Activated T-helper 1 cell treated with anti-CD3 and anti-CD28 coated beads, Interleukin-12 subunit alpha, Interleukin-12 subunit beta, Interleukin-2, Interleukin-4 antibody, amounts not matched to agents 30 ng/mL and 10 ng/mL and 1 ng/mL, durations not matched to agents 14 hours and 24 hours and 36 hours (primary cell): ENCODE measurements at regions of chr5 and their contacts with region 1.

Region 1: GRCh38 chr5:62284946-62285891 is 20.8 kb upstream of the KIF2A start:
- DNase-seq: peak; percentile 69
- H3K4me3 Mint-ChIP-seq: peak overlapping the region; percentile 51
- H3K27ac Mint-ChIP-seq: peak overlapping the region; percentile 95
- H3K4me1 Mint-ChIP-seq: peaks cover 83% of the 10 kb centered on the region
- H3K27me3 Mint-ChIP-seq: peaks cover 1% of the 10 kb centered on the region

Region 2: DNA sequence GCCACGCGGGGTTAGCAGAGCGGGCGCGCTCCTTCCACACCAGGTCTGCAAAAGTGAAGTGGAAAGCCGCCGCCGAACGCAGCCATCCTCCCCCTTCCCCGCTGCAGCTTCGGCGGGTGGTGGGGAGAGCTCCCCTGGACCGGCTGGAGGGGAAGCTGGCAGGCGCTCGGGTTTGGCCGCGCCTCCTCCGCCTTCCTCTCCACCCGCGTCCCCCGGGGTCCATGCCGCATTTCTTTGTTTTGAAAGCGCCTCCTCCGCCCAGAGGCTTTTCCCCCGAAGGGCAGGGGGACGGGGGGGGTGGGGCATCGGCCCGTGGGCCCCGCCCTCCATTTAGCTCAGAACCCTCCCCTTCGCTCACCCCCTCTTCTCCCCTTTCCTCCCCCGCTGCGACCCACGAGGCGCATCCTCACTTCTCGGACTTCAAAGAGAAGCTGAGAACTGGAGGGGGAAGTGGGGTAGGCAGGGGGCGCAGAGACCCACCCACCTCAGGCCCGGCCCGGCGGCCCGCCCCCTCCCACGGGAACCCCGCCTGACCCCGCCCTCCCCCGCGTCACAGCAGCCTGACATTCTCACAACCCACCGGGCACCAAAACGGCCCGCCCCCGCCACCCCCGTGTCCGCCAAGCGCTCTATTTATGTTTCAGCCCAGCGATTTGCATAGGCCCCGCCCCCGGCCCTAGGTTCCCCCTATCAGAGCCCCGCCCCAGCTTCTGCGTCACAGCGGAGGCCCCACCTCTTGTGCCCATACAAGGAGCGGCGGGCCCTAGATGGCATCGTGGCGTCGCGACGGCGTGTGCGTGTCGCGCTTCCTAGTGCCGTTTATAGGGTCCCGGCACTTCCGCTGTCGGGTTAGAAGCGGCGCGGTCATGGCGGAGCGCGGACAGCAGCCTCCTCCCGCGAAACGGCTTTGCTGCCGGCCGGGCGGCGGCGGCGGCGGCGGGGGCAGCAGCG is 953.5 kb before region 1 on chr5 and contains the start of gene ZSWIM6:
- intact Hi-C with region 1: loop called (anchors 5 kb)
- DNase-seq: peak; percentile 96
- H3K4me3 Mint-ChIP-seq: peak within 1 kb of the TSS; percentile 96
- H3K27ac Mint-ChIP-seq: peak within 1 kb of the TSS; percentile 99
- H3K4me1 Mint-ChIP-seq: peaks cover 52% of the 10 kb centered on the region
- H3K27me3 Mint-ChIP-seq: peaks cover 45% of the 10 kb centered on the region
- total RNA-seq, gene ZSWIM6: 9.6 TPM in 2 replicates

Region 3: GRCh38 chr5:62231576-62231975 is 53.6 kb before region 1 on chr5:
- intact Hi-C with region 1: loop called (anchors 1 kb)
- DNase-seq: no peak
- H3K4me3 Mint-ChIP-seq: no peak overlapping the region
- H3K27ac Mint-ChIP-seq: no peak overlapping the region
- H3K4me1 Mint-ChIP-seq: peaks cover 58% of the 10 kb centered on the region
- H3K27me3 Mint-ChIP-seq: no peaks in the 10 kb centered on the region

Region 4: DNA sequence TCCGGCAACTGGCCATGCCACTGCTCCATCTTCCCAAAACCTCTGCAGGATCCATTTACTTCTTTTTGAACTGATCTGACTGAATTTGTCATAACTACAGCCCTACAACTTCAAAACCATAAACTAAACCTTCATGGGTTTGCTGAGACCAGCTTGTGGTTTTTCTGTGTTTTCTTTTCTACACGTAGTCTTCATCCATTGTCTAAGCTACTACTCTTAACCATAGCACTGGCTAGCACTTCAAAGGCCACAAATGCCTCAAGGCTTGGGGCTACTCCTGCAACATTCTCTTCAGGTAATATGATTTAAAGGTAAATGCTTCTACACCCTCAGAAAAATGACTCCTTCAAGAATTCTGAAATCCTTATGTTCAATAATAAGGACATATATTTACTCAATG is 11.8 kb after region 1 on chr5:
- intact Hi-C with region 1: loop called (anchors 1 kb)
- DNase-seq: peak; percentile 44
- H3K4me3 Mint-ChIP-seq: peak overlapping the region; percentile 50
- H3K27ac Mint-ChIP-seq: peak overlapping the region; percentile 67
- H3K4me1 Mint-ChIP-seq: peaks cover 76% of the 10 kb centered on the region
- H3K27me3 Mint-ChIP-seq: no peaks in the 10 kb centered on the region

Region 5: DNA sequence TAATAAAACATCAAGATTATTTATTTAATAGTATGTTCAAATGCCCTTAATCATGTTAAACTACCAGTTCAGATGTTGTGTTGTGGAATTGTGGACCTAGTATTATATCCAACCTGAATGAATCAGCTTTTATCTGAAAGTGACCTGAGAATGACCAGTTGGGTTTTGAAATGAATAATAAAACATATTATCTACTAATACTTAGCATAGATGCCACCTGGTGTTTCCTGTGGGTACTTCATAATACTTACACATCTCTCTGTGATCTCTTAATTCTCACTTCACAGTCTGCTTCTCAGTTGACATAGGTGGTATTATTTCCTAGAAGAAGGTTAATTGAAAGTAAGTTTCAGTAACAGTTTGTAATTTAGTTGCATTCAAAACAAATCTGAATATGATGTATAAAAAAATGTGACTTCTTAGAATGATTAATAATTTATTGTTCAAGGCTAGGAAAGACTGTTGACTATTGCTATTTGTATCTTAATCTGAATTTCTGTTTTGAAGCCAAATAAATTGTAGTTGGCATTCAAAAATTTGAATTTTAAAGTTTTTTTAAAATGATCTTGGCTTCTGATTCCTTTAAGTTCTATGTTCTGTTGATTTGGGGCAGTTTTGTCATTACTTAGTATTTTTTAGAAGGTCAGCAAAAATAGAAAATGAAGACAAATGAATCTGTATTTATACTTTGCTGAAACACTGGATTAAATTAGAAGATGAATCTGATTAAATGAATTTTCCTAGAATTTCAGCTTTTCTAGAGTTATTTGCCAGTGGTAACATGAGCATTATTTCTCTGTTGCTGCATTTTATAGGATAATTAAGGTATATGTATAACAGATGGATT is 69.0 kb after region 1 on chr5:
- intact Hi-C with region 1: loop called (anchors 2 kb)
- DNase-seq: no peak
- H3K4me3 Mint-ChIP-seq: no peak overlapping the region
- H3K27ac Mint-ChIP-seq: no peak overlapping the region
- H3K4me1 Mint-ChIP-seq: peaks cover 18% of the 10 kb centered on the region
- H3K27me3 Mint-ChIP-seq: no peaks in the 10 kb centered on the region

Region 6: GRCh38 chr5:62550103-62550502 is 264.9 kb after region 1 on chr5:
- intact Hi-C with region 1: no loop called
- DNase-seq: no peak
- H3K4me3 Mint-ChIP-seq: no peak overlapping the region
- H3K27ac Mint-ChIP-seq: no peak overlapping the region
- H3K4me1 Mint-ChIP-seq: no peaks in the 10 kb centered on the region
- H3K27me3 Mint-ChIP-seq: no peaks in the 10 kb centered on the region